ENCODE measurements at regions of chr16 and their contacts with region 1.

Region 1: GRCh38 chr16:51982715-51983680 is 563.9 kb downstream of the TOX3 start:
- DNase-seq: peak; percentile 66
- ATAC-seq: no peak
- H3K4me3 ChIP-seq: no peak overlapping the region
- H3K27ac ChIP-seq: no peak overlapping the region
- H3K4me1 ChIP-seq: no peaks in the 10 kb centered on the region
- H3K27me3 ChIP-seq: no peaks in the 10 kb centered on the region
- CTCF ChIP-seq: peak; percentile 73

Region 2: GRCh38 chr16:50821586-50821985 is 1161.4 kb before region 1 on chr16:
- CTCF ChIA-PET with region 1: no interaction called
- POLR2A ChIA-PET with region 1: no interaction called
- intact Hi-C with region 1: loop called (anchors 10 kb)
- DNase-seq: peak; percentile 66
- ATAC-seq: peak; percentile 61
- H3K4me3 ChIP-seq: no peak overlapping the region
- H3K27ac ChIP-seq: no peak overlapping the region
- H3K4me1 ChIP-seq: no peaks in the 10 kb centered on the region
- H3K27me3 ChIP-seq: peaks cover 20% of the 10 kb centered on the region
- CTCF ChIP-seq: peak; percentile 51

Region 3: DNA sequence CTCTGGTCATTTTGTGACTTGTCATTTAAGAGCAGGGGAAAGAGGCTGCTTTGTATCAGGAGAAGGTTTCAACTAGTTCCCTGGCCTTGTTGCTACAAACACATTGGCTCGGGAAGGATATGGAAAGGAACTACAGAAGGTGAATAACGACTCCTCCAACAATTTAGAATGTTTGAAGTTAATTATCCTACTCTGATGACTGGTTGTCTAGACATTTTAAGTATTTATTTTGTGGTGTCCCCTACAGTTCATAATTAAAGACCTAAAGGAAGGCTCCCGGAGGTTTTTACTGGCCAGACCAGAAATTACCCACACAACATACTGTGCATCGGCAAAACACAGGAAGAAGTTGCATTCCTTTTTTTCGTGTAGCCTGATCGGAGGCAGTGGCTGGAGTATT is 316.2 kb before region 1 on chr16:
- CTCF ChIA-PET with region 1: no interaction called
- POLR2A ChIA-PET with region 1: no interaction called
- intact Hi-C with region 1: no loop called
- DNase-seq: no peak
- ATAC-seq: no peak
- H3K4me3 ChIP-seq: no peak overlapping the region
- H3K27ac ChIP-seq: no peak overlapping the region
- H3K4me1 ChIP-seq: no peaks in the 10 kb centered on the region
- H3K27me3 ChIP-seq: no peaks in the 10 kb centered on the region
- CTCF ChIP-seq: no peak

Region 4: DNA sequence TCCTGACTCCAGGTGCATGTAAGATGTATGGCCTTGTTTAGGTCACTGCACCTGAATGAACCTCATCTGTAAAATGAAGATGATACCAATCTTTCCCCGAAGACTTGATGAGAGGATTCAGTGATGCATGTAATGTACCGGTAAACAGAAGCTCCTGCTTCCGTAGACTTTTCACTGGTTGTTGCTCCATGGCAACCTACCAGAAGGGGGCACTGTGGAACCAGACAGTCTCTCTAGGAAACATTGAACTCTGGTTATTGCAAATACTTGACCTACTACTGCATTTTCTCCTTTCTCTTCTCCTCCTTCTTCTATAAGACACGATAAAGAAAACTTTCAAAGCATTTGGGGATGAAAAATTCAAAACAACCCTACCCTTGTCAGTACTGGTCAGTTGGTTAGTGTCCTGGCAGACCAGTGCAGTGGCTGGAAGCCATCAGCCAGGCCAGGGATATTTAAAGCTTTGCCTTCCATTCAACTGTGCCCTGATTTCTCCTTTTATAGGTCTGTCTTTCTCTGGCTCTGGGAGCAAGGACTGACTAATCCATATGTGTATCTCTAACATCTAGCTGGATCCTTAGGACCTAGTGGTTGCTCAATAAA is 164.6 kb before region 1 on chr16:
- CTCF ChIA-PET with region 1: no interaction called
- POLR2A ChIA-PET with region 1: no interaction called
- intact Hi-C with region 1: loop called (anchors 10 kb)
- DNase-seq: peak; percentile 21
- ATAC-seq: no peak
- H3K4me3 ChIP-seq: no peak overlapping the region
- H3K27ac ChIP-seq: no peak overlapping the region
- H3K4me1 ChIP-seq: no peaks in the 10 kb centered on the region
- H3K27me3 ChIP-seq: no peaks in the 10 kb centered on the region
- CTCF ChIP-seq: peak; percentile 43